HEK293 (cell line): ENCODE measurements at regions of chr19 and their contacts with region 1.

Region 1: DNA sequence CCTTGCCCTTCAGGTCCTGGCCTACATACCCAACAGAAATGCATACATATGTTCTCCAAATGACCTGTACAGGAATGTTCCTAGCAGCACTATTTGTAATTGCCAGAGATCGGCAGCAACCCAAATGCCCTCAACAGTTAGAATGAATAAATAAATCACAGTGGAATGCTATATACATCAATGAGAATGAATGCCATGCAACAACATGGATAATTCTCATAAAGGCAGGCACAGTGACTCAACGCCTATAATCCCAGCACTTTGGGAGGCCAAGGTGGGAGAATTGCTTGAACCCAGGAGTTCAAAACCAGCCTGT is 18.6 kb downstream of the TEX101 start:
- H3K4me3 ChIP-seq: no peak overlapping the region
- H3K27ac ChIP-seq: no peak overlapping the region
- H3K4me1 ChIP-seq: peaks cover 2% of the 10 kb centered on the region
- CTCF ChIP-seq: no peak

Region 2: DNA sequence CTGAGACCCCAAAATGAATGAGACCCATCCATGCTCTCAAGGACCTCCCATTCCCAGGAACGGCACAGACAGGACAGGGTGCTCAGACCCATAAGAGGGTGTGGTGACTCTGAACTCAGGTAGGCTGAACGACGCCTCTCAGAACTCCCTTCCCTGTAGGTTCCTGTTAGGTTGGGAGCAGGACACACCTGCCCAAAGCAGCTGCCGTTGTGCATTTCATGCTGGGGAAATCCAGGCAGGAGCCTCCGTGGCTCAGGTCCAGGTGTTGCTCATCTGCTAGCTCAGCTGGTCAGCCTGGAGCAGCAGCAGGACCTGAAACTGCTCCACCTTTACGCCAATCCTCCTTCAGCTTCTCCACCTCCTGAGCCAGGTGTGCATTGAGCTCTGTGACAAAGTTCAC is 37.8 kb before region 1 on chr19:
- CTCF ChIA-PET with region 1: interaction called, 15 read pairs
- POLR2A ChIA-PET with region 1: no interaction called
- H3K4me3 ChIP-seq: no peak overlapping the region
- H3K27ac ChIP-seq: no peak overlapping the region
- H3K4me1 ChIP-seq: peaks cover 23% of the 10 kb centered on the region
- CTCF ChIP-seq: no peak

Region 3: GRCh38 chr19:43526884-43527859 is 93.9 kb after region 1 on chr19 and contains the start of gene ETHE1:
- CTCF ChIA-PET with region 1: interaction called, 749 read pairs
- POLR2A ChIA-PET with region 1: no interaction called
- H3K4me3 ChIP-seq: peak within 1 kb of the TSS; percentile 60
- H3K27ac ChIP-seq: peak within 1 kb of the TSS; percentile 64; the same call in 1 of the 2 replicates
- H3K4me1 ChIP-seq: peaks cover 30% of the 10 kb centered on the region
- CTCF ChIP-seq: peak; percentile 79

Region 4: DNA sequence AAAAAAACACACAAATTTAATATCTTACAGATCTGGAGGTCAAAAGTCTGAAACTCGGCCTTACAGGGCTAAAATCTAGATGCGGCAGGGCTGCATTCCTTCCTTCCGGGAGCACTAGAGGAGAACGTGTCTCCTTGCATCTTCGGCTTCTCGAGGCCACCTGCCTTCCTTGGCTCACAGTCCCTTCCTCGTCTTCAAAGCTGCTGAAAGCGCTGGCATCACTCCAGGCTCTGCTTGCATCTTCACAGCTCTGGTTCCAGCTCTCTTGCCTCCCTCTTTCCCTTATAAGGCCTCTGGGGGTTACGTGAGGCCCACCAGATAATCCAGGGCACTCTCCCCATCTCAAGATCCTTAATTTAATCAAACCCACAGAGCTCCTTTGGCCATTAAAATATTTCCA is 131.5 kb after region 1 on chr19:
- CTCF ChIA-PET with region 1: no interaction called
- POLR2A ChIA-PET with region 1: no interaction called
- H3K4me3 ChIP-seq: no peak overlapping the region
- H3K27ac ChIP-seq: no peak overlapping the region
- H3K4me1 ChIP-seq: peaks cover 2% of the 10 kb centered on the region; the same call in 1 of the 2 replicates
- CTCF ChIP-seq: no peak